ENCODE measurements at regions of chrX and their contacts with region 1.

Region 1: GRCh38 chrX:132615391-132616131 is 126.7 kb upstream of the MBNL3 start:
- DNase-seq: peak; percentile 9
- H3K4me3 Mint-ChIP-seq: no peak overlapping the region
- H3K27ac Mint-ChIP-seq: no peak overlapping the region
- H3K4me1 Mint-ChIP-seq: no peaks in the 10 kb centered on the region
- H3K27me3 Mint-ChIP-seq: peaks cover 4% of the 10 kb centered on the region

Region 2: DNA sequence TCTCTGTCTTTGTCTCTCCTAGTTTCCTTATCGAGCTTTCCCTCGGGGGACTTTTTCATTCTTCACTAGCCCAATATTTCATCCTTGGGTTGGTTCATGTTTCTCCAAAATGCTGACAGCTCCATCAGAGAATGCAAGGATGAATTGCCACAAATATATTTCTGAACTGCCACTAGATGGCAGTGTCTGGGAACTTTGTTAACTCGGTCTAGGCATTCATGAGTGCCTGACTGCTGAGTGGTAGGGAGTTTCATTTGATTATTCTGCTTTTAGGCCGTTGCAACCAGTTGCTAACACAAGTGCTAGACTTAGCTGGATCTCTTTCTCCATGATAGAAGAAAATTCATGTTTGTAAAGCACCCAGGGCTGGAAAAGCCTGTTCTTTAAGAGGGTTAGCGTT is 322.8 kb before region 1 on chrX:
- intact Hi-C with region 1: loop called (anchors 2 kb)
- DNase-seq: peak; percentile 8
- H3K4me3 Mint-ChIP-seq: no peak overlapping the region
- H3K27ac Mint-ChIP-seq: no peak overlapping the region
- H3K4me1 Mint-ChIP-seq: no peaks in the 10 kb centered on the region
- H3K27me3 Mint-ChIP-seq: peaks cover 4% of the 10 kb centered on the region

Region 3: DNA sequence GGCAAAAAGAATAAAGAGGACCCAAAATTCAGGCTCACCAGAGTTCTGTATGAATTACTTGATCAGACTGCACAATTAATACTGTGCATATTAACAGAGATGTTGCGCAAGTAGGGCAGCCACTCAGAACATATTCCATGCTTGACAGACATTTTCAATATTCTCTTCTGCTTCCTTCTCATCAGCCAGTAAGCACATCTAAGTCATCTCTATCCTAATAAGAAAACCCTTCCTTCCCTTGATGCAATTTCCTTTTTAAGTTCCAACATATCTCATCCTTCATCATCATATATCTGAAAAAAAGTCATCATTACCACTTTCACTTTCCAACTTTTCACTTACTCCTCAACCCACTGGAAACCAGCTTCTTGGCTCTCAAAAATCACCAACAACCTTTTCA is 141.0 kb before region 1 on chrX:
- intact Hi-C with region 1: no loop called
- DNase-seq: no peak
- H3K4me3 Mint-ChIP-seq: no peak overlapping the region
- H3K27ac Mint-ChIP-seq: no peak overlapping the region
- H3K4me1 Mint-ChIP-seq: peaks cover 19% of the 10 kb centered on the region
- H3K27me3 Mint-ChIP-seq: no peaks in the 10 kb centered on the region